Body of pancreas (tissue), 4 donors: ENCODE measurements at regions of chr5 and their contacts with region 1.

Region 1: DNA sequence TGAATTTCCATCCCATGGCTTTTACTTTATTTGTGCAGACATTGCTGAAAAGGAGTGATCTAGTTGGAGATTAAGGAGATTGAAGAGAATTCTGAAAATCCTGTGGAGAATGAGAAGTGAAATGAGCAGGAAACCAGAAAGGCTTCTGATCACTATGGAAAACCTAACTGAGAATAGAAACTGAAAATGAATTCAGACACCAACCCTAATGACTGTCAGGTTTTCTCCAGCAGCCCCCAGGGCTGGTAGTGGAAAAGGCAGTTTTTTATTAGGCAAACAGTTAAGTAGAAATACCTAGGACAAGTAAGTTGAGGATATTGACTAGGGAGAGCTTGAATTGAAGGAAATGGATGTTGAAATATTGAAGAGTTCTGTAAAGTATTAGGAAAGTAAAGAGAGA is 14.7 kb upstream of the ARRDC3 start:
- DNase-seq: no peak
- ATAC-seq: no peak
- H3K4me3 ChIP-seq: no peak overlapping the region
- H3K27ac ChIP-seq: no peak overlapping the region
- H3K4me1 ChIP-seq: no peaks in the 10 kb centered on the region
- H3K27me3 ChIP-seq: no peaks in the 10 kb centered on the region
- CTCF ChIP-seq: no peak
- POLR2A ChIP-seq: no peak

Region 2: DNA sequence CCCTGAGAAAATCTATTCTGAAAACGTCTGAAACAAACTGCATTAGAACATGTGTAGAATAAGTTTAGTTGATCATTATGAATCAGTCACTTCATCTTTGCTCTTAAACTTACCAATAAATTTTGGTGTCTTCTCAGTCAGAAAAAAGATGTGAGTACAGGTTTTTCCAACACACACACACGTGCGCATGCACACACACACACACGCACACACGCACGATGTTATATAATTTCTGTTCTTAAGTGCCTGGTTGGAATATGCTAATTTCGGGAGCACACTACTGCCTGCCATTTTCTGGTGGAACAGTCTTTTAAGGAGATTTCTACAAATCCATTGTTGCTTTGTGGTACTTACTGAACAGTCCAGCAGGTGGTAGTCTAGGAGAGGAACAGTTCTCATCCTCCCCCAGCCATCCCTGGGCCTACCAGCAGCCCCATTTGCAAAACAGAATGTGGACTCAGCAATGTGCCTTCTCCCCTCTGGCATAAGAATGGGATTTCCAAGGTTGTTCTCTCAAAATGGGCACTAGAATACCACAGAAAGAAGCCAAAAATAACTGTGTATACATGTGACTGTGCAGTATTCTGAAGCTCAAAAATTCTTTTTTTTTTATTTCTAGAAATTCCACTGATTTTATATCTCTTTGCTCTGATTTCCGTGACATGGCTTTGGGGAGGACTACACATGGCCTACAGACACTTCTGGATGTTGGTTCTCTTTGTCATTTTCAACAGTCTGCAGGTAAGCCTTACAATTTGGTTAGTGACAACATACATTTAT is 296.0 kb before region 1 on chr5:
- intact Hi-C with region 1: loop called (anchors 10 kb)
- DNase-seq: peak; percentile 64 to 78 (median 70)
- ATAC-seq: peak; percentile 99
- H3K4me3 ChIP-seq: no peak overlapping the region
- H3K27ac ChIP-seq: no peak overlapping the region
- H3K4me1 ChIP-seq: no peaks in the 10 kb centered on the region
- H3K27me3 ChIP-seq: no peaks in the 10 kb centered on the region
- CTCF ChIP-seq: peak; percentile 24 to 91 (median 83)
- POLR2A ChIP-seq: no peak